Dendritic cell treated with granulocyte-macrophage colony-stimulating factor and Interleukin-4, amounts not matched to agents 40 ng/mL and 50 ng/mL, for 4 days (primary cell): ENCODE measurements at regions of chr1 and their contacts with region 1.

Region 1: GRCh38 chr1:45521398-45522323 is at the start of gene PRDX1:
- H3K4me3 Mint-ChIP-seq: peak within 1 kb of the TSS; percentile 95
- H3K27ac Mint-ChIP-seq: peak within 1 kb of the TSS; percentile 98
- H3K4me1 Mint-ChIP-seq: peaks cover 53% of the 10 kb centered on the region
- H3K27me3 Mint-ChIP-seq: no peaks in the 10 kb centered on the region

Region 2: GRCh38 chr1:45543581-45544417 is 22.1 kb after region 1 on chr1:
- intact Hi-C with region 1: loop called (anchors 1 kb)
- H3K4me3 Mint-ChIP-seq: peak overlapping the region; percentile 57
- H3K27ac Mint-ChIP-seq: peak overlapping the region; percentile 91
- H3K4me1 Mint-ChIP-seq: peaks cover 66% of the 10 kb centered on the region
- H3K27me3 Mint-ChIP-seq: peaks cover 3% of the 10 kb centered on the region

Region 3: GRCh38 chr1:45550401-45551351 is 29.0 kb after region 1 on chr1 and contains the start of gene AKR1A1:
- intact Hi-C with region 1: loop called (anchors 1 kb)
- H3K4me3 Mint-ChIP-seq: peak within 1 kb of the TSS; percentile 93
- H3K27ac Mint-ChIP-seq: peak within 1 kb of the TSS; percentile 96
- H3K4me1 Mint-ChIP-seq: peaks cover 43% of the 10 kb centered on the region
- H3K27me3 Mint-ChIP-seq: peaks cover 3% of the 10 kb centered on the region

Region 4: GRCh38 chr1:45608175-45609156 is 86.8 kb after region 1 on chr1:
- intact Hi-C with region 1: no loop called
- H3K4me3 Mint-ChIP-seq: peak overlapping the region; percentile 43
- H3K27ac Mint-ChIP-seq: peak overlapping the region; percentile 79
- H3K4me1 Mint-ChIP-seq: peaks cover 27% of the 10 kb centered on the region
- H3K27me3 Mint-ChIP-seq: no peaks in the 10 kb centered on the region